Heart left ventricle (tissue), 16 donors: ENCODE measurements at regions of chr12 and their contacts with region 1.

Region 1: GRCh38 chr12:129483111-129483893 is 420.5 kb downstream of the TMEM132D start:
- DNase-seq: no peak
- ATAC-seq: no peak
- H3K4me3 ChIP-seq: no peak overlapping the region
- H3K27ac ChIP-seq: no peak overlapping the region
- H3K4me1 ChIP-seq: no peaks in the 10 kb centered on the region
- H3K27me3 ChIP-seq: no peaks in the 10 kb centered on the region
- CTCF ChIP-seq: no peak
- POLR2A ChIP-seq: no peak

Region 2: GRCh38 chr12:127943481-127944210 is 1539.7 kb before region 1 on chr12:
- intact Hi-C with region 1: no loop called
- DNase-seq: no peak
- ATAC-seq: no peak
- H3K4me3 ChIP-seq: no peak overlapping the region
- H3K27ac ChIP-seq: no peak overlapping the region
- H3K4me1 ChIP-seq: no peaks in the 10 kb centered on the region
- H3K27me3 ChIP-seq: no peaks in the 10 kb centered on the region
- CTCF ChIP-seq: no peak
- POLR2A ChIP-seq: no peak

Region 3: DNA sequence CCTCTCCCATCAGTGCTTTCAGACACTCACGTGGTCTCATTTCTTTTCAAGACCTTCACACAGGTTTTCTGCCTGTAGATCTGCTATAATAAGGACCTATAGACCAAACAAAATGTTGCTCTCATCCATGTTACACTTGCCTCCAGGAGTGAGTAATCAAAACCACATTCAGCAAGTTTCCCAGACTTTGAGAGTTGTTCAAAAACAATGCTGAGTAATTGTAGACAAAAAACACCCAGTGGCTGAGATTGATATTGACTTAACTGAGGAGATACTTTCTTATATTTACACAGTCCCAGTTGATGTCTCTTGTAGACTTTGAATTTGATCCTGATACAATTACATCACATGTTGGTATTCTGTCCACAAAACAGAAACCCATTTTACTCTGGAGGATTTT is 37.5 kb after region 1 on chr12:
- intact Hi-C with region 1: no loop called
- DNase-seq: no peak
- ATAC-seq: no peak
- H3K4me3 ChIP-seq: no peak overlapping the region
- H3K27ac ChIP-seq: no peak overlapping the region
- H3K4me1 ChIP-seq: no peaks in the 10 kb centered on the region
- H3K27me3 ChIP-seq: no peaks in the 10 kb centered on the region
- CTCF ChIP-seq: no peak
- POLR2A ChIP-seq: no peak

Region 4: DNA sequence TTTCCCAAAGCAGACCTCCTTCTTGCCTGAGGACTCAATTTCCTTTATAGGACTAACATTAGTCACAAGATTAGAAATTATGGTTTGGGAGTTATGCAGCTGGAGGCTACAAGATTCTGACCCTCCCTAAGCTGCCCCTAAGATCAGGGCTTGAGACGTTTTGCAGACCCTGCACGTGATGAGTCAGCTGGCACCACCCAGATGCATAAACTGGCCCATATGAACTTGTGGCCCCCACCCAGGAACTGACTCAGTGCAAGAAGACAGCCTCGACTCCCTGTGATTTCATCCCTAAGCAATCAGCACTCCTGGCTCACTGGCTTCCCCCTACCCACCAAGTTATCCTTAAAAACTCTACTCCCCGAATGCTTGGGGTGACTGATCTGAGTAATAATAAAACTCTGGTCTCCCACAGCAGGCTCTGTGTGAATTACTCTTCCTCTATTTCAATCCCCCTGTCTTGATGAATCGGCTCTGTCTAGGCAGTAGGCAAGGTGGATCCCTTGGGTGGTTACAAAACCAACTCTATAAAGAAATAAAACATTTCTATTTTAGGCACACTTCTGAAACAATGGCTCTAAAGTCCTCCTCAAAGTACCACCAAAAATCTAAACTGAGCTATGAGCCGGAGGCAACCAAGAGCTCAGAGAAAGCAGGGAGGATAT is 187.1 kb after region 1 on chr12:
- intact Hi-C with region 1: no loop called
- DNase-seq: no peak
- ATAC-seq: no peak
- H3K4me3 ChIP-seq: no peak overlapping the region
- H3K27ac ChIP-seq: no peak overlapping the region
- H3K4me1 ChIP-seq: no peaks in the 10 kb centered on the region
- H3K27me3 ChIP-seq: no peaks in the 10 kb centered on the region
- CTCF ChIP-seq: no peak
- POLR2A ChIP-seq: no peak

Region 5: GRCh38 chr12:130127919-130128813 is 644.9 kb after region 1 on chr12:
- intact Hi-C with region 1: loop called in 1 of 10 experiments (anchors 10 kb)
- DNase-seq: peak in 4 of 5 donors; percentile 33 to 56 (median 44)
- ATAC-seq: peak; percentile 38 to 81 (median 70)
- H3K4me3 ChIP-seq: no peak overlapping the region
- H3K27ac ChIP-seq: peak overlapping the region in 11 of 12 donors; percentile 10 to 73 (median 38)
- H3K4me1 ChIP-seq: peaks cover 0 to 18% (median 0%) of the 10 kb centered on the region in 12 donors
- H3K27me3 ChIP-seq: peaks cover 0 to 18% (median 0%) of the 10 kb centered on the region in 9 donors
- CTCF ChIP-seq: no peak
- POLR2A ChIP-seq: no peak